ENCODE measurements at regions of chr3 and their contacts with region 1.

Region 1: GRCh38 chr3:17431004-17431403 is 311.4 kb downstream of the TBC1D5 start:
- DNase-seq: peak in 3 of 4 experiments; percentile 25 to 49 (median 41)
- ATAC-seq: peak; percentile 89
- H3K4me3 ChIP-seq: no peak overlapping the region
- H3K27ac ChIP-seq: no peak overlapping the region; the same call in 2 of the 3 replicates
- H3K4me1 ChIP-seq: no peaks in the 10 kb centered on the region; a peak in 1 of 5 replicates
- H3K27me3 ChIP-seq: no peaks in the 10 kb centered on the region
- CTCF ChIP-seq: peak in 2 of 3 experiments; percentile 48 to 77; a peak in 4 of 6 replicates
- EP300 ChIP-seq: no peak
- POLR2A ChIP-seq: no peak
- RAD21 ChIP-seq: peak; percentile 81 to 90

Region 2: DNA sequence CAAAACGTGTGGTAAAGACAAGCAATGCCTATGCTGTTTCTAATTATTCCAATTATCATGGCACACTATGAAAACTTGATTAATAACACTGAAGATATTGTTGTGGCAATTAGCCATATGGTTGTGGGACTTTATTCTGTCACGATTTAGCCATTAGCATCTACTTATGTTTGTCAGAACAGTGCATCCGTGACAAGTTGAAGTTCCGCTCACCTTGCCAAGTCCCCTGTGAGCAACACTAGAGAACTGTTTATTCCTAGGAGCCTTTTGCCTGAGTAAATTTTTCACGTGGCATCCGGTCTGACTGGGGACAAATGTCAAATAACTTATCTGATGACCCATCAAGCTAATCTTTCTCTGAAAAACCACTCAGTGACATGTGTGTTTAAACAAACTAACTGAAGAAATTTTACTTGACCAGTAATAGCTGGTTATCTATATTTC is 91.8 kb before region 1 on chr3:
- CTCF ChIA-PET with region 1: no interaction called
- POLR2A ChIA-PET with region 1: no interaction called
- in situ Hi-C with region 1: no loop called
- intact Hi-C with region 1: no loop called
- DNase-seq: peak in 1 of 4 experiments; percentile 33
- ATAC-seq: peak; percentile 55
- H3K4me3 ChIP-seq: no peak overlapping the region
- H3K27ac ChIP-seq: no peak overlapping the region; the same call in 2 of the 3 replicates
- H3K4me1 ChIP-seq: peaks cover 4 to 23% of the 10 kb centered on the region in 2 experiments
- H3K27me3 ChIP-seq: no peaks in the 10 kb centered on the region
- CTCF ChIP-seq: no peak
- EP300 ChIP-seq: peak; percentile 80
- POLR2A ChIP-seq: no peak
- RAD21 ChIP-seq: no peak

Region 3: DNA sequence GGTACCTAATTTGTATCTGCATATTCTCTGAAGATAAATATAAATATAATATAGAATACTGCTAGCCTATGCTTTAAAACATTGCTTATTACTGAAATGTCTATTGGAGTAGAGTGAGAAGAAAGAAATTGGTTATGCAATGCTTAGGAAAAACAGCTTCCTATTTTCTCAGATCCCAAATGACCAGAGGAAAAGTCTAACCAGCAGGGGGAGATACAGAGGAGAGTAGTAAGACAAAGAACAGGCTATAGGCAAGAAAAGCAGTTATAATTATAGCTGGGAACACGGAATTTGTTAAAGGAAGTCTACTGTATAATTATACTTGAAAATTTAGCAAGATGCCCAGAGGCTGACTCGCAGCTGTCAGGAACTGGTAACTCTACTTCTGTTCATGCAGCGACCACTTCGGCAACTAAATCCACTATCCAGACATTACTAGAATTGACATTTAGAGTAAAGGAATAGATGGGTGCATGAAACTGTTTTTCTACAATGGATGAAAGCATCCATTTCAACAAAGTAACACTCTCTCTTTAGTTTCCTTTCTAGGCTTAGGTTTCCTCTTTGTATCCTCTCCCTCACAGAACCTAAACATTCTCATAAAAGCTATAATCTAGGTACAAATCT is 214.2 kb after region 1 on chr3:
- CTCF ChIA-PET with region 1: no interaction called
- POLR2A ChIA-PET with region 1: no interaction called
- in situ Hi-C with region 1: no loop called
- intact Hi-C with region 1: loop called (anchors 5 kb)
- DNase-seq: peak; percentile 17 to 75 (median 36)
- ATAC-seq: peak; percentile 93
- H3K4me3 ChIP-seq: no peak overlapping the region
- H3K27ac ChIP-seq: no peak overlapping the region
- H3K4me1 ChIP-seq: no peaks in the 10 kb centered on the region
- H3K27me3 ChIP-seq: no peaks in the 10 kb centered on the region
- CTCF ChIP-seq: peak; percentile 64 to 85 (median 74); a peak in 5 of 6 replicates
- EP300 ChIP-seq: no peak
- POLR2A ChIP-seq: no peak
- RAD21 ChIP-seq: peak; percentile 74 to 87

Region 4: GRCh38 chr3:17686613-17687012 is 255.6 kb after region 1 on chr3:
- CTCF ChIA-PET with region 1: no interaction called
- POLR2A ChIA-PET with region 1: no interaction called
- in situ Hi-C with region 1: no loop called
- intact Hi-C with region 1: loop called (anchors 1 kb)
- DNase-seq: peak in 1 of 4 experiments; percentile 53
- ATAC-seq: peak; percentile 84
- H3K4me3 ChIP-seq: no peak overlapping the region
- H3K27ac ChIP-seq: no peak overlapping the region
- H3K4me1 ChIP-seq: no peaks in the 10 kb centered on the region
- H3K27me3 ChIP-seq: no peaks in the 10 kb centered on the region
- CTCF ChIP-seq: peak in 2 of 3 experiments; percentile 38 to 48; a peak in 3 of 6 replicates
- EP300 ChIP-seq: no peak
- POLR2A ChIP-seq: no peak
- RAD21 ChIP-seq: peak in 1 of 2 experiments; percentile 73; a peak in 2 of 4 replicates

Region 5: DNA sequence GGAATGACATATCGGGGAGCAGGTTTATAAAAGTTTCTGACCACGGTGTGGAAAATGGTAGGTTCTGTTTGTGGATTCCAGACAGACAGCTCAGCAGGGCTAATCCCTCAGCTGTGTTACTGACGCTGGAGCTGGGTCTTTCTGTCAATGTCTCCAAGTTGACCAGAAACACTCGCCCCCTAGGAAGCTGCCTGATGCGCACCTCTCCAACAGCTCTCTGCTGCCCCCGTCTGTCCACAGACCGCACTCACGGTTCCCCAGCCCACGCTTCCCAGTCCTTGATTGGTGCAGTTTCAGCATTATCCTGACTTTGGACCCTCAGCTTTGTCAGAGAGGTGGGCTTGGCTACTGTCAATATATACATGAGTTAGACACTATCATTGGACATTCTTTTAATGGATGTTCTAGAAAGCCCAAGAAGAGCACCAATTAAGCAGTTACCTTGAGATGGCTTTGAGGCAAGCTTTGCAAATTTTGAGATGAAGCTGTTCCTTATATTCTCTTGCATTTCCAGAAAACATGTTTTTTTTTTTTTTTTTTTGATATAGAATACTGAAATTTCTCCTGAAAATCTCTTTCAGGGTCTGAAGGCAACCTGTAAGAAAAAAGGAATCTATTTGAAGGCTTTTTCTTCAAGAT is 410.3 kb after region 1 on chr3:
- CTCF ChIA-PET with region 1: interaction called, 17 read pairs
- POLR2A ChIA-PET with region 1: interaction called, 3 read pairs
- in situ Hi-C with region 1: loop called (anchors 5 kb)
- intact Hi-C with region 1: loop called (anchors 1 kb)
- DNase-seq: peak; percentile 81 to 87 (median 84)
- ATAC-seq: peak; percentile 99
- H3K4me3 ChIP-seq: no peak overlapping the region
- H3K27ac ChIP-seq: no peak overlapping the region
- H3K4me1 ChIP-seq: no peaks in the 10 kb centered on the region
- H3K27me3 ChIP-seq: peaks cover 0 to 5% of the 10 kb centered on the region in 2 experiments; a peak in 3 of 5 replicates
- CTCF ChIP-seq: peak; percentile 98 to 99 (median 99)
- EP300 ChIP-seq: peak; percentile 19; the same call in 1 of the 2 replicates
- POLR2A ChIP-seq: no peak
- RAD21 ChIP-seq: peak; percentile 99

Region 6: GRCh38 chr3:17979252-17979651 is 548.2 kb after region 1 on chr3:
- CTCF ChIA-PET with region 1: no interaction called
- POLR2A ChIA-PET with region 1: no interaction called
- in situ Hi-C with region 1: no loop called
- intact Hi-C with region 1: loop called (anchors 10 kb)
- DNase-seq: peak in 1 of 4 experiments; percentile 12
- ATAC-seq: peak; percentile 48; the same call in 2 of the 3 replicates
- H3K4me3 ChIP-seq: no peak overlapping the region
- H3K27ac ChIP-seq: no peak overlapping the region
- H3K4me1 ChIP-seq: no peaks in the 10 kb centered on the region
- H3K27me3 ChIP-seq: peaks cover 0 to 3% of the 10 kb centered on the region in 2 experiments; a peak in 2 of 5 replicates
- CTCF ChIP-seq: peak in 1 of 3 experiments; percentile 31; a peak in 1 of 6 replicates
- EP300 ChIP-seq: no peak
- POLR2A ChIP-seq: no peak
- RAD21 ChIP-seq: peak; percentile 35 to 47

Region 7: DNA sequence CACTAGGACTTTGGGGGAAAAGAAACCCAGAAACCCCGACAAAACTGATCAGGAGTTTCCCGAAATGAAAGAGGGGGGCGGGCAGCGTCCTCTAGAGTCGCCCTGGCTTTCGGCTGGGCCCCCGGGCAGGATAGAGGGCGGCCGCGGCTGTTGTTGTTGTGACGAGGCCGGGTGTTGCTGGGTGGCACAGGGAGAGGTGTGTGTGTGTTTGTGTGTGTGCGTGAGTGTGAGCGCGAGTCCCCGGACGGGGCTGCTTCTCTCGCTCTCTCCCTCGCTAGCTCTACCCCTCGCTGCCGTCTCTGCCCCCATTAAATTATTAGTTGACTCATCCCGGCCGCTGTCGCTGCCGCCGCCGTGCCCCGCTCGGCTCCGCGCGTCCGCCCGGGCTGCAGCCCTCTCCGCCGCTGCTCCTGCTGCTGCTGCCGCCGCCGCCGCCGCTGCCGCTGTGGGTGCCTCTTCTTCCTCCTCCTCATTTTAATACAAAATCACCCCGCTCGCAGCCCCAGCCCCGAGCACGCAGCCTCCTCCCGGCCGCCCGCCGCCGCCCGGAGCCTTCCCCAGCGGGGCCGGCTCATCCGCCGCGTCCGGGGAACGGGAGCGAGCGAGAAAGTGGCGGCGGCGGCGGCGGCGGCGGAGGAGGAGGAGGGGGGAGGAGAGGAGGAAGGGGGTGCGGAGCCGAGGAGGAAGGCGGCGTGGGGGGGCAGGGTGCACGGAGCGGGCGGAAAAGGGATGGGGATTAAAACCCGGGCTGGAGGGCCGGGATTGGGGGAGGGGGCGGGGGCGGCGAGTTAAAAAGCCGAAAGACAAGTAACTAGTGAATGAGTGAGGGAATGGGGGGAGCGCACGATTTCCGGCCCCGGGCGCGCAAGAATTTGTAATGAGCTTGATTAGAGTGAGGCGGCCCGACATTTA is 994.0 kb after region 1 on chr3 and contains the start of gene SATB1:
- CTCF ChIA-PET with region 1: no interaction called
- POLR2A ChIA-PET with region 1: no interaction called
- in situ Hi-C with region 1: loop called (anchors 25 kb)
- intact Hi-C with region 1: no loop called
- DNase-seq: peak; percentile 19 to 41 (median 35)
- ATAC-seq: peak; percentile 80
- H3K4me3 ChIP-seq: peak within 1 kb of the TSS; percentile 38
- H3K27ac ChIP-seq: no peak within 1 kb of the TSS
- H3K4me1 ChIP-seq: peaks cover 0 to 14% of the 10 kb centered on the region in 2 experiments; a peak in 2 of 5 replicates
- H3K27me3 ChIP-seq: peaks cover 6 to 15% of the 10 kb centered on the region in 2 experiments; a peak in 3 of 5 replicates
- CTCF ChIP-seq: no peak
- EP300 ChIP-seq: no peak
- POLR2A ChIP-seq: no peak
- RAD21 ChIP-seq: no peak
- polyA plus RNA-seq, gene SATB1: 0.03 to 0.08 TPM